Spleen (tissue), 13 donors: ENCODE measurements at regions of chr1 and their contacts with region 1.

Region 1: DNA sequence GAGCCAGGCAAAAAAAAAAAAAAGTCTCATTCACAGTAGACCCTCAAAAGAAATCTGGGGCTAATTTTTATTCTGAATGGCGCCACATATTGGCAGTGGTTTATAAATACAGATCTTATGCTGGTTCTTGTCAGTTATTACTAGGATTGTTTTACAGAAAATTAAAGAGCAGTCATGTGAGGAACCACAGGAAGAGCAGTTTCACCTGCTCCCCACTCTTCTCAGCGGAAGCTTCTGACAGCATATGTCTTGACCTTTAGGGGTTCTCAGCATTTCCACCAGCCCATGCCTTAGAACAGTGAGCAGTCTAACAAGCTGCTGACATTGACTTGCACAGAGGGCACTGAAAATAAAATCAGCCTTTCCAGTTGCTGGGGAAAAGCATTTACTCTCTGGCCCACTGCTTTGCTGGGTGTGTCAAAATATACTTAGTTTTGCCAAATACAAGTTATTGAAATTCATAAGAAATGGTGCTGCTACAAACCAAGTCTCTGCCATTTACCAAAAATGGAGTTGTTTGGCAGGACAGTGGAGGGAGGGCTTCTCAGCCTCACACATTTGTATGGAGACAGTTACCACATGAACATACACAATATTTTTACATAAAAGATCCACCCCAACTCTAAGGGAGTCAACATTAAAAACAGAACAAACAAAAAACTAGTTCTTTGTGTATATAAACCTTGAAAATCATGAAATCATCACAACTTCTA is 144.2 kb downstream of the SYT2 start:
- DNase-seq: no peak
- H3K4me3 ChIP-seq: no peak overlapping the region
- H3K27ac ChIP-seq: peak overlapping the region in 6 of 8 donors; percentile 15 to 58 (median 29)
- H3K4me1 ChIP-seq: peaks cover 9 to 68% (median 33%) of the 10 kb centered on the region in 6 donors
- H3K27me3 ChIP-seq: no peaks in the 10 kb centered on the region
- CTCF ChIP-seq: no peak
- POLR2A ChIP-seq: no peak

Region 2: GRCh38 chr1:202452493-202452892 is 113.6 kb before region 1 on chr1:
- intact Hi-C with region 1: no loop called
- DNase-seq: no peak
- H3K4me3 ChIP-seq: no peak overlapping the region
- H3K27ac ChIP-seq: no peak overlapping the region
- H3K4me1 ChIP-seq: no peaks in the 10 kb centered on the region
- H3K27me3 ChIP-seq: no peaks in the 10 kb centered on the region
- CTCF ChIP-seq: no peak
- POLR2A ChIP-seq: no peak

Region 3: DNA sequence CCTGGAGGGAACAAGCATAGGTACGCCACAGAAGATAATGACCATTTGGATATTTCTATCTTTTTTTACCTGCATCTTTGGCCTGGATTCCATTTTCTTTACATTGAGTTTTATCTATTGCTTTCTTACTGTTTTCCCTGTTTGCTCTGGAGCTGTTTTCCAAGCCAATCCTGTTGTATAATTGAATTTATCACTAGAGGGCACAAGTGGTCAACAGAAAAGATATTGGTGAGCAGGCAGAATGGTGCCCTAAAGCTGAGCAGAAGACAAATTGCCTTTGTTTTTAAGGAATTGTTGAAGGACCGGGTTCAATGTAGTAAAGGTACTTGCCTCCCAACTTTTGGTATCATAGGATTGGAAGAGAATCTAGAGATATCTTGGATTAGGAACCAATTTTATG is 64.8 kb before region 1 on chr1:
- intact Hi-C with region 1: loop called (anchors 10 kb)
- DNase-seq: no peak
- H3K4me3 ChIP-seq: no peak overlapping the region
- H3K27ac ChIP-seq: no peak overlapping the region
- H3K4me1 ChIP-seq: no peaks in the 10 kb centered on the region
- H3K27me3 ChIP-seq: no peaks in the 10 kb centered on the region
- CTCF ChIP-seq: peak in 10 of 11 experiments; percentile 9 to 59 (median 41)
- POLR2A ChIP-seq: no peak